Heart left ventricle (tissue), 16 donors: ENCODE measurements at regions of chr18 and their contacts with region 1.

Region 1: DNA sequence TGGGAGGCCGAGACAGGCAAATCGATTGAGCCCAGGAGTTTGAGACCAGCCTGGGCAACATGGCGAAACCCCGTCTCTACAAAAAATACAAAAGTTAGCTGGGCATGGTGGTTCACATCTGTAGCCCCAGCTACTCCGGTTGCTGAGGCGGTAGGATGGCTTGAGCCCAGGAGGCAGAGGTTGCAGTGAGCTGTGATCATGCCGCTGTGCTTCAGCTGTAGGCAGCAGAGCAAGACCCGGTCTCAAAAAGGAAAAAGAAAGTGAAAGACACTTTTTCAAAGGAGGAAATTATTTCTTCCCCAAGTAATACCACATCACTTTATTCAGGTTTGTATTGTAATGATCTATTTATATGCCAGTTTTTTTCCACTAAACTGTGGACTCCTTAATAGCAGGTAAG is 35.7 kb upstream of the TAF4B start:
- DNase-seq: no peak
- ATAC-seq: no peak
- H3K4me3 ChIP-seq: peak overlapping the region in 1 of 12 donors; percentile 9
- H3K27ac ChIP-seq: peak overlapping the region in 1 of 12 donors; percentile 15
- H3K4me1 ChIP-seq: peaks cover 0 to 5% (median 0%) of the 10 kb centered on the region in 12 donors
- H3K27me3 ChIP-seq: no peaks in the 10 kb centered on the region
- CTCF ChIP-seq: no peak
- POLR2A ChIP-seq: no peak

Region 2: DNA sequence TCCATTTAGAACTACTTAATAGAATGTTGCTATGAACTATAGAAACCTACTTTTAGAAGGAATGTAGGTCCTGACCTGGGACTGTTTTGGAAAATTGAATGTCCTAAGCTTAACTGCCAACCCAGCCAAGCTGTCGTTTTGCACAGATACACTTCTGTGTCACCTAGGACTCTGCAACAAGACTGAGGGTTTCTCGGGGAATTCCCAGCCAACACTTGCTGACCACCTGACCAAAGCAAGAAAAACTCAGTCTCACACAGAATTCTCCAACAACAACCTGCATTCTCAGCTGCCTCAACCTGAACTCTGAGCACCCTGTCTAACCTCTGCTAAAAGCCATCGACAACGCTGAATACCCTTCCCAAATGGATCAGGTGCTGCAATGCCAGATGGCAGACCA is 228.3 kb before region 1 on chr18:
- intact Hi-C with region 1: no loop called
- DNase-seq: no peak
- ATAC-seq: no peak
- H3K4me3 ChIP-seq: no peak overlapping the region
- H3K27ac ChIP-seq: no peak overlapping the region
- H3K4me1 ChIP-seq: no peaks in the 10 kb centered on the region
- H3K27me3 ChIP-seq: peaks cover 0 to 6% (median 0%) of the 10 kb centered on the region in 9 donors
- CTCF ChIP-seq: no peak
- POLR2A ChIP-seq: no peak

Region 3: GRCh38 chr18:26159353-26159752 is 31.2 kb before region 1 on chr18:
- intact Hi-C with region 1: loop called in 1 of 10 experiments (anchors 2 kb)
- DNase-seq: no peak
- ATAC-seq: no peak
- H3K4me3 ChIP-seq: no peak overlapping the region
- H3K27ac ChIP-seq: no peak overlapping the region
- H3K4me1 ChIP-seq: no peaks in the 10 kb centered on the region
- H3K27me3 ChIP-seq: no peaks in the 10 kb centered on the region
- CTCF ChIP-seq: peak in 4 of 12 donors; percentile 22 to 29 (median 24)
- POLR2A ChIP-seq: no peak

Region 4: GRCh38 chr18:26268454-26268853 is 77.9 kb after region 1 on chr18:
- intact Hi-C with region 1: loop called in 1 of 10 experiments (anchors 10 kb)
- DNase-seq: no peak
- ATAC-seq: no peak
- H3K4me3 ChIP-seq: no peak overlapping the region
- H3K27ac ChIP-seq: no peak overlapping the region
- H3K4me1 ChIP-seq: no peaks in the 10 kb centered on the region
- H3K27me3 ChIP-seq: no peaks in the 10 kb centered on the region
- CTCF ChIP-seq: no peak
- POLR2A ChIP-seq: no peak